Activated CD8-positive, alpha-beta memory T cell treated with anti-CD3 and anti-CD28 coated beads, Interleukin-2, amount 10 ng/mL, durations not matched to agents 7 days and 5 days (primary cell): ENCODE measurements at regions of chr6 and their contacts with region 1.

Region 1: DNA sequence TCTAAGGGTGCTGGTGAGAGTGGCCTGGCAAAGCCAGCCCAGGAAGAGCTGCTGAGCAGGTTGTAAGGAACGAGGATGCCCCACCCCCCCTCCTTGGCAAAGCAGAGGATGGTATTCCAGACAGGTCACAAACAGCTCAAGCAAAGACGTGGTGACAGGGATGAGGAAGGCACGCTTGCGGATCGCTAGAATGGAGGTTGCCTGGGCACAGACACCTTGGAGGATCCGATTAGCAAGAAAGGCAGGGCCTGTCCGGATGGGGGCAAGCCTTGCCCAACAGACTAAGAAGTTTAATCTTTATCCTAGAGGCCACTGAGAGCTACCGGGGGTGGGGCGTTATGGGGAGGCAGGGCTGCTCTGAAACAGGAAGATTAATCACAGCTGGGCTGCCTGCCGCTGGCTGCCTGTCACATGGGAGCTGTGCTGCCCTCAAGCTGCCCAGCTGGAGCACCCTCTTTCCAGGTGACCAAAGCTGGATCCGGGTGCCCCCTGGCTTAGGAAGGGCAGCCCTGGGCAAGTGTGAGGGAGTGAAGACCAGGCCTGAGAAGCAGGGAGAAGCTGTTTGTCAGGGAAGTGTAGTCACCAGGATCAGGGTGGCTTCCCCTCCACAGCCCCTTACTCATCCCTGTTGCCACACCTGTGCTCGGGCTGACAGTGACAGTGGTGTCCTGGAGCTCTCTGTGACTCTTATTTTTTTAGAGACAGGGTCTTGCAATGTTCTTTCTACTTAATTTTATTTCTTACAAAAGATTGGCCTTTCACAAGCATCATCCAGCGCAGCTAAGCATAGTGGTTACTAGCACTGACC is 9.1 kb upstream of the MAPK13 start:
- DNase-seq: peak; percentile 87
- ATAC-seq: peak; percentile 52
- H3K4me3 Mint-ChIP-seq: peak overlapping the region; percentile 69
- H3K27ac Mint-ChIP-seq: peak overlapping the region; percentile 99
- H3K4me1 Mint-ChIP-seq: peaks cover 86% of the 10 kb centered on the region
- H3K27me3 Mint-ChIP-seq: no peaks in the 10 kb centered on the region

Region 2: DNA sequence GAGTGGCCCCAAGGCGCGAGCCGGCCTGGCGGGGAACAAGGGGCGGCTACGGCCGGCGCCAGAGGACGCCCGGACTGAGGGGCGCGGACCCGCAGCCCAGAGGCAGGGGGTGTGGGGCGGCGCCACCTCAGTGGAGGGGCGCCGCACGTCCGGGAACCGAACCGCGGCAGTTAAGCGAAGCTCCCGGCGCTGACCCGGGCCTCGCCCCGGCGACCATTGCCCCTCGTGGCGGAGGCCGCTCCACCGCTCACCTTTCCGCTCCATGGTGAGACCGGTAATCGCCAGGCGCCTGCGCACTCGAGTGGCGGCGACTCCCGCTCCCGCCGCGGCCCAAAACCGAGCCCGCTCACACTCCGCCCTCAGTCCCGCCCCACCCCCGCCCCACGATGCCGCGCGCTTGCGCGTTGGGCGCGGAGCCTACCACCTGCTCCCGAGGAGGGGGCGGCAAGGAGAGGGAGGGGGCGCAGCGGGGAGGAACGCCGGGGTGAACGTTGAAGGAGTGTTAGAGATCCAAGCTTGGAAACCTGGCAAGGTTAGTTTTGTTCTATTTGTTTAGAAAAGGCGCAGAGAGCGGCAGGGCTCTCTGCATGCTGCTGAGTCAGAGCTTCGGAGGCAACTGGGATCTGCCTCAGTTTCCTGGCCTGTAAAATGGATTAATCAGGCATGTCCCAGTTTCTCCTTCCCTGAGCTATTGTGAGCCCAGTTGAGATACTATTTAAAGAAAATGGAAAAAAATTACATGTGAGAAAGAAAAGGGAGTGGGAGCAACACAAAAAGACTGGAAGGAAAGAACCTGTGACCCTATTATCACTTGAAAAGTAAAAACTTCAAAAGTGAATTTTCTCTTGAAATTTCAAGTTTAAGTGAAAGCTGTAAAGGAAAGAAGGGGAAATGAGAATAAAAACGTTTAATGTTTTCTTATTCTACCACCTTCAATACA is 200.1 kb before region 1 on chr6 and contains the start of gene SRPK1:
- CTCF ChIA-PET with region 1: no interaction called
- DNase-seq: peak; percentile 92
- ATAC-seq: peak; percentile 84
- H3K4me3 Mint-ChIP-seq: peak within 1 kb of the TSS; percentile 99
- H3K27ac Mint-ChIP-seq: peak within 1 kb of the TSS; percentile 97
- H3K4me1 Mint-ChIP-seq: peaks cover 41% of the 10 kb centered on the region
- H3K27me3 Mint-ChIP-seq: no peaks in the 10 kb centered on the region
- total RNA-seq, gene SRPK1: 88.2 to 101 TPM

Region 3: DNA sequence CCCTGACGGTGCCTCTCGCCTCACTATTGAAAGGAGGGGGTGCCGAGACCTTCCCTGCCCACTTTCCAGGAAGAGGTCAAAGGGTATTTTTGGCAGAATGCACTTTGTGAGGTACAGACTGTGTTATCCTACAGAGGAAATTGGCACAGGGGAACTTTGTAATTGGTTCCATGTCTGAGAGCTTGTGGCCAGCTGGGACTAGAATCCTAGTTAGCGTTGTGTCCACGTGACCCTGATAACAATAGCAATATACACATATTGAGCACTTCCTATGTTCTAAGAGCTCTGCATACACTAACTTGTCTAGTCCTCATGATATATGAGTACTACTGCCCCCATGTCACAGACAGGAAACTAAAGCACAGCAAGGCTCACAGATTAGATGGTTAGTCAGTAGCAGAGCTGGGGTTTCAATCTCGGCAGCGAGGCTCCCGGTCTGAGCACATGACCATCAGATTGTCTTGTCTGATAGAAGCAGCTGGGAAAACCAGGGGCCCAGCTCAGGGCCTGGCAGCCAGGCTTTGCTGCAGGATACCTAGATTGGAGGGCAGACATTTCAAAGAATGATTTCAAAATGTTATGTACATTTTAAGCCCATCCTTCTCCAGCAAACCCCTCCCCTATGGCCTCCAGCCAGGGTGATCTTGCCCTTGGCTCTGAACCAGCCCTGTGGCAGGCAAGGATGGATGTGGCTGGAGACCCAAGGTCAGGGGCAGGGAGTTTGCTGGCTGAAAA is 10.5 kb after region 1 on chr6:
- CTCF ChIA-PET with region 1: interaction called, 27 read pairs
- DNase-seq: peak; percentile 78
- ATAC-seq: peak; percentile 81
- H3K4me3 Mint-ChIP-seq: peak overlapping the region; percentile 78
- H3K27ac Mint-ChIP-seq: peak overlapping the region; percentile 91
- H3K4me1 Mint-ChIP-seq: peaks cover 42% of the 10 kb centered on the region
- H3K27me3 Mint-ChIP-seq: no peaks in the 10 kb centered on the region